HEK293 (cell line): ENCODE measurements at regions of chr17 and their contacts with region 1.

Region 1: GRCh38 chr17:77054936-77055335 is 85.8 kb upstream of the SEC14L1 start:
- H3K4me3 ChIP-seq: no peak overlapping the region
- H3K27ac ChIP-seq: no peak overlapping the region
- H3K4me1 ChIP-seq: no peaks in the 10 kb centered on the region
- CTCF ChIP-seq: no peak

Region 2: DNA sequence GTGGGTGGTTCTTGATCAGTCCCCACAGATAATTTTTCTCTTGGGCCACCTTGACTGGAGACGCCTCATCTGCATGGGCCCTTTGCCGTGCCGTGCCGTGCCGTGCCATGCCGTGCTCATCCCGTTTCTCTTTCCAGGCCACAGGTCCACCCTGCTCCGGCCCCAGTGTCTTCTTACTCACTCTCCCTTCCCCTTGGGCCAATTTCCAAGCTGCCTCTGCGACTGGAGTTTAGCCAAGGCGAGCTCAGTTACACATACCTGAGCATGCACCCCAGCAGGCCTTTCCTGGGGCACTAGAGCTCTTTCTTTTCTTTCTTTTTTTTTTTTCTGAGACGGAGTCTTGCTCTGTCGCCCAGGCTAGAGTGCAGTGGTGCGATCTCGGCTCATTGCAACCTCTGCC is 227.2 kb before region 1 on chr17:
- CTCF ChIA-PET with region 1: no interaction called
- POLR2A ChIA-PET with region 1: no interaction called
- H3K4me3 ChIP-seq: no peak overlapping the region
- H3K27ac ChIP-seq: no peak overlapping the region
- H3K4me1 ChIP-seq: no peaks in the 10 kb centered on the region
- CTCF ChIP-seq: no peak

Region 3: DNA sequence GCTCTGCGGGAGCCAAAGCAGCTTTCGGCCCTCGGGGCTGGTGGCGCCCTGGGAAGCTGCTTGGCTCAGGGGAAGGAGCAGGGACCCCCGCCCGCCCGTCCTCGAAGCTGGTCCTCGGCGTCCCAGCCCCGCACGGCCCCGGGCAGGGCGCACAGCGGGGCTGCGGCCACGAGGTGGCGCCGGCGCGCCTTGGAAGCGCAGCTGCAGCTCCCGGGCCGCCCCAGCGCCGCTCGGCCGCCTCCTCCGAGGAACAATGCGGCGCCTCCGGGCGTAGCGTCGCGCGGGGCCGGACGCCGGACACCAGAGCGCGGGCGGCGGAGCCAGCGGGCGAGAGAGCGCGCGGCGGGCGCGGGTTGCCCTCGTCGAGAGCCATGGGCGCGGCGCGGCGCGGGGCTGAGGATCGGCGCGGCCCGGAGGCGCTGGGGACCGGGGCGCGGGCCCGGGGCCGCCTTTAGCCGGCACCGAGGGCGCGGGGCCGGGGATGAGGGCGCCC is 186.7 kb before region 1 on chr17 and contains the start of gene MGAT5B:
- CTCF ChIA-PET with region 1: interaction called, 61 read pairs
- POLR2A ChIA-PET with region 1: interaction called, 9 read pairs
- H3K4me3 ChIP-seq: peak within 1 kb of the TSS; percentile 34
- H3K27ac ChIP-seq: peak within 1 kb of the TSS; percentile 59; the same call in 1 of the 2 replicates
- H3K4me1 ChIP-seq: no peaks in the 10 kb centered on the region; the same call in 1 of the 2 replicates
- CTCF ChIP-seq: peak; percentile 44; the same call in 1 of the 2 replicates

Region 4: DNA sequence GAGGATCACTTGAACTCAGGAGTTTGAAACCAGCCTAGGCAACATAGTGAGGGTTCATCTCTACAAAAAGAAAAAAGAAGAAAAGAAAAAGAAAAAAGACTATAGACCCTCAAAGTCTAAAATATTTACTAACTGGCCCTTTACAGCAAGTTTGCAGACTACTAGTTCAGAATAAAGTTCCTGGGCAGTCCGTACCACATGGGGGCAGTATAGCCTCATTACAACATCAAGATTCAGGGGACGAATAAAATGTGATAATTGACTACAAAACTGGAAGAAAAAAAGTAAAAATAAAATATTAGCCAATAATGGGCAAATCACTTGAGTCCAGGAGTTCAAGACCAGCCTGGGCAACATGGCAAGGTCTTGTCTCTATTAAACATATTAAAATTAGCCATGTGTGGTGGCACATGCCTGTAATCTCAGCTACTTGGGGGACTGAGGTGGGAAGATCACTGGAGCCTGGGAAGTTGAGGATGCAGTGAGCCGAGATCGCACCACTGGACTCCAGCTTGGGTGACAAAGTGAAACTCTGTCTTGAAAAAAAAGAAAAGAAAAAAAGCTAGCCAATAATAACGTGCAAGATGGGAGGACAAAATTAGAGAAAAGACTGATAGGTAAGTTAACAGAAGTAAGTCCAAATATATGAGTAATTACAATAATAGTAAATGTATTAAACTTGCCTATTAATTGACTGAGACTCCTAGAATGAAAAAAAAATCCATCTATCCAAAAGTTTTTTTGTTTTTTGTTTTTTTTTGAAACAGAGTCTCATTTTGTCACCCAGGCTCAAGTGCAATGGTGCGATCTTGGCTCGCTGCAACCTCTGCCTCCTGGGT is 43.5 kb before region 1 on chr17:
- CTCF ChIA-PET with region 1: interaction called, 96 read pairs
- POLR2A ChIA-PET with region 1: no interaction called
- H3K4me3 ChIP-seq: no peak overlapping the region
- H3K27ac ChIP-seq: no peak overlapping the region
- H3K4me1 ChIP-seq: no peaks in the 10 kb centered on the region
- CTCF ChIP-seq: no peak

Region 5: GRCh38 chr17:77019955-77020379 is 35.0 kb before region 1 on chr17:
- CTCF ChIA-PET with region 1: interaction called, 18 read pairs
- POLR2A ChIA-PET with region 1: no interaction called
- H3K4me3 ChIP-seq: no peak overlapping the region
- H3K27ac ChIP-seq: no peak overlapping the region
- H3K4me1 ChIP-seq: no peaks in the 10 kb centered on the region
- CTCF ChIP-seq: no peak

Region 6: DNA sequence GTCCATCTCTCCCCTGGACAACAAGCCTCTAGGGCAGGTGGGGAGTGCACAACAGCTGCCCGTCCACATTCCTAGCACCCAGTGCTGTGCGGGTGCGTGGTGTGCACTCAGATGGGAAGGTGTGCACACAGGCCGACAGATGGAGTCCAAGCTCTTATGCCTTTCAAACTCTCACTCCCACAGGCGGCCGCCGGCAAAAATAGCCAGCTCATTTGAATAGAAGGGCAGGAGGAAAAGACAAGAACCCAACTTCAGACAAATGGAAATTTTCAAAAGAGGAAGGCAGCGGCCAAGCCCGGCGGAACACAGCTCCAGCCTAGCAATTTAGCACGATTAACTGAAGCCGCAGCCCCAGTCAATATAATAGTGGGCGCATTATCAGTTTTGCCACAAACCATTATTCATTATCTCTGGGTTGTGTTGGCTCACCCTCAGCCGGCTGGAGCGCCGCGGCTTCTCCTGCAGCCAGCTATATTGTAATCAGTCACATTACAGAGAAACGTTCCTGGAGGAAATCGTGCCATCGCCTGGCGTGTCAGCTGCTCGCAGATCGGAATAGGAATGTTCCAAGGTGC is 18.0 kb before region 1 on chr17:
- CTCF ChIA-PET with region 1: interaction called, 59 read pairs
- POLR2A ChIA-PET with region 1: no interaction called
- H3K4me3 ChIP-seq: no peak overlapping the region
- H3K27ac ChIP-seq: no peak overlapping the region
- H3K4me1 ChIP-seq: no peaks in the 10 kb centered on the region
- CTCF ChIP-seq: no peak

Region 7: DNA sequence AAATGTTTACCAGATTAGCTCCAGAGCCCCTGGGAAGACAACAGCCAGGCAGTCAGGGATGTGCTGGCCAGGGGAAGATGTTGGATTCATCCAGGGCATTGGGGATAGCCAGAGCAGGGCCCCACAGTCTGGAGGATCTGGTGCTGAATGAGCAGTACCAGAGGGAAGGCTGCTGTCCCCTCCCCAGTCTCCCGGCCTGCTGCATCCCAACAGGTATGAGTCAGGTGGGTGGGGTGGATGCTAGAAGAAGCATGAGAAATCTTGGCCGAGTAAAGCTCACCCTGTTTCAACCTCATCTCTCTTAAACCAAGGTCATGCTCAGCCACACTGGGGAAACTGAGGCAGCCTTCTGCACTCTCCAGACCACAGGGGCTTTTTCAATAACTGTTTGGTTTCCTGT is 14.0 kb after region 1 on chr17:
- CTCF ChIA-PET with region 1: interaction called, 91 read pairs
- POLR2A ChIA-PET with region 1: no interaction called
- H3K4me3 ChIP-seq: no peak overlapping the region
- H3K27ac ChIP-seq: no peak overlapping the region
- H3K4me1 ChIP-seq: no peaks in the 10 kb centered on the region
- CTCF ChIP-seq: no peak

Region 8: DNA sequence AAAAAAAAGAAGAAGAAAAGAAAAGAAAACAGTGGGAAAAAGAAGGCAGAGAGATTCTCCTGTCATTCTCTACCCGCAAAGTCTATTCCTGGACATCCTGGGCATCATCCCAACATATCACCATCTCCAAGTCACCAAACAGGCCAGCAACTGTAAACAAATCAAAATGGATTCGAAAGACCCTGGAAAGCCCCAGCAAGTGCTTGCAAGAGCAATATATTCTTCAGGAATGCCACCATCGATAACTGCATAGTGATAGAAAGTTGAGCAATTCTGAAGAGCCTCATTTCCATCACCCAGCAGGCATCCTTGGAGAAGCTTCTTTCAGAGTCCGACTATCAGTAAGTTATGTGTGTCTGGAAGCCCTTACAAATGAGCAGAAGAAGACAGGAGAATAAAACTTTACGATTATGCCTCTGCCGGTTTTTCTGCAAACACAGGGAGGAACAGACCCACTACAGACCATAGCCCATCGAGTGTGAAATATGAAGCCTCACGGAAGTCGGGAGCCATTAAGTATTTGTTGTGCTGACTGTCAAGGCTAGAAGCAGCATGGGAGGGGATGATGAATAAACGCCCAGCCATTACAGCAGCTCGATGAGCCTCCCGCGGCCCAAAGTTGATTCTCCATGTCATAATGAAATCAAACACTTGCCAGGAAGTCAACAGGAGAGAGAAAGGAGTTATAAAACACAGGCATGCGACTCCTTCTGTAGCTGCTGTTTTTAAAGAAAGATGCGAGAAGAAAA is 21.4 kb after region 1 on chr17:
- CTCF ChIA-PET with region 1: interaction called, 11 read pairs
- POLR2A ChIA-PET with region 1: no interaction called
- H3K4me3 ChIP-seq: no peak overlapping the region
- H3K27ac ChIP-seq: no peak overlapping the region; the same call in 1 of the 2 replicates
- H3K4me1 ChIP-seq: peaks cover 4% of the 10 kb centered on the region; the same call in 1 of the 2 replicates
- CTCF ChIP-seq: no peak